Natural killer cell (primary cell): ENCODE measurements at regions of chr6 and their contacts with region 1.

Region 1: DNA sequence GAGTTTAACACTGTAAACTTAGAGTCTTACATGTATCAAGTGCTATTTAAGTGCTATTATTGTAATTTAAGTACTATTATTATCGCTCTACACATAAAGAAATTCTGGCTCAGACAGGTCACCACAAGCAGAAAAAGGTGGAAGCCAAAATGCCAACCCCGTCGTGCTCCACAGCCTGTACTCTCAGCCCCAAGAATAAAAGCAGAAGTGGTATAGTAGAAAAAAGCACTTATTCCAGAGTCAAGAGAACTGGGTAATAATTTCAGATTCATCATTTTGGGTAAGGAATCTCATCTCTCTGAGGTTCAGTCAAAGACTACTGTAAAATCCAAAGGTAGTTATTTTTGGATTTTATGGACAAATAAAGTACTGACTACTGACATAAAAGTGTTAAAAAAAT is 943 bp downstream of the ZUP1 start:
- DNase-seq: peak in 1 of 2 donors; percentile 10
- ATAC-seq: no peak
- H3K4me3 ChIP-seq: peak overlapping the region; percentile 73
- H3K4me3 Mint-ChIP-seq: peak overlapping the region; percentile 97
- H3K27ac ChIP-seq: no peak overlapping the region
- H3K27ac Mint-ChIP-seq: peak overlapping the region; percentile 94 to 97
- H3K4me1 ChIP-seq: peaks cover 11% of the 10 kb centered on the region
- H3K4me1 Mint-ChIP-seq: peaks cover 31% of the 10 kb centered on the region in 2 donors
- H3K27me3 ChIP-seq: no peaks in the 10 kb centered on the region
- H3K27me3 Mint-ChIP-seq: peaks cover 11 to 18% of the 10 kb centered on the region in 2 donors
- CTCF ChIP-seq: no peak

Region 2: DNA sequence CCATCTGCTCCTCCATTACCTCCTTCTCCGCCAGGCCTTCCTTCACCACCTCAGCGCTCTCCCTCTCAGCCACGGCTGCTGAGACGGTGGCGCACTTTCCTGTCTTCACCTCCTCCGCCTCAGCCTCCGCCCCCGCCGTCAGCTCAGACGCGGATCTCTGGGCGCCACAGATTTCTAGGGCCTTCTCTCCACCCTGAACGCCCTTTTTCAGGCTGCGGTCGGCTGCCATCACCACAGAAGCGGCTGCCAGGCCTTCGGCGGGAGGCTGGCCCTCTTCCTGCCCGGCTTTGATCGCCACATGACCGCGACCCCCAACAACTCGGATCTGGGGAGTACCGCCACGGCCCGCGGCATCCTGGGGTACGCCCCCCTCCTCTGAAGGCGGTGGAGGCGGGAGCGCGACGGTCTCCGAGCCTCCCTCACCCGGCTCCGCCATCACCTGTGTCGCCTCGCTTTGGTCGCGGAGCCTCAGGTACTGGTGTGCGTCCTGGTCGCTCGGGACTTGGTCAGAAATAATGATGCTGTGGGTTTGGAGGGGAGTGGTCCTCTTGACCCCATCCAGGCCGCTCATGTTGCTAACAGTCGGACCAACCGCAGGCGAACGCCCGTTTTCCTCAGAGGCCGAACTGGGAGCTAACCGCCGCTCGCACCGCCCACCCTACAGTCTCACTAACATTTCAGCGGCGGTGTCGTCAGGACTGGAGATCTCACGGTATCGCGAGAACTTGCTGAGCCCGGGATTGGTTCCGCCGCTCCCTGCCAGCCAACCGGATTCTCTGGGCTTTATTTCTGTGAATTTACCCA is 388.2 kb before region 1 on chr6 and contains the start of gene TSPYL1:
- intact Hi-C with region 1: loop called (anchors 1 kb)
- DNase-seq: peak; percentile 91 to 98
- ATAC-seq: peak; percentile 88 to 95 (median 89)
- H3K4me3 ChIP-seq: peak within 1 kb of the TSS; percentile 92
- H3K4me3 Mint-ChIP-seq: peak within 1 kb of the TSS; percentile 96
- H3K27ac ChIP-seq: peak within 1 kb of the TSS; percentile 99
- H3K27ac Mint-ChIP-seq: peak within 1 kb of the TSS; percentile 98 to 100
- H3K4me1 ChIP-seq: peaks cover 26% of the 10 kb centered on the region
- H3K4me1 Mint-ChIP-seq: peaks cover 56 to 57% of the 10 kb centered on the region in 2 donors
- H3K27me3 ChIP-seq: no peaks in the 10 kb centered on the region
- H3K27me3 Mint-ChIP-seq: no peaks in the 10 kb centered on the region
- CTCF ChIP-seq: no peak
- total RNA-seq, gene TSPYL1: 134 to 143 (median 142) TPM

Region 3: GRCh38 chr6:116680975-116681808 is 13.6 kb after region 1 on chr6 and contains the start of gene KPNA5:
- intact Hi-C with region 1: loop called (anchors 1 kb)
- DNase-seq: peak; percentile 81 to 94
- ATAC-seq: peak; percentile 91 to 97 (median 93)
- H3K4me3 ChIP-seq: peak within 1 kb of the TSS; percentile 78
- H3K4me3 Mint-ChIP-seq: peak within 1 kb of the TSS; percentile 99
- H3K27ac ChIP-seq: peak within 1 kb of the TSS; percentile 87
- H3K27ac Mint-ChIP-seq: peak within 1 kb of the TSS; percentile 94 to 100
- H3K4me1 ChIP-seq: peaks cover 17% of the 10 kb centered on the region
- H3K4me1 Mint-ChIP-seq: peaks cover 29 to 39% of the 10 kb centered on the region in 2 donors
- H3K27me3 ChIP-seq: no peaks in the 10 kb centered on the region
- H3K27me3 Mint-ChIP-seq: no peaks in the 10 kb centered on the region
- CTCF ChIP-seq: no peak
- total RNA-seq, gene KPNA5: 28.6 to 31.4 (median 29.1) TPM

Region 4: DNA sequence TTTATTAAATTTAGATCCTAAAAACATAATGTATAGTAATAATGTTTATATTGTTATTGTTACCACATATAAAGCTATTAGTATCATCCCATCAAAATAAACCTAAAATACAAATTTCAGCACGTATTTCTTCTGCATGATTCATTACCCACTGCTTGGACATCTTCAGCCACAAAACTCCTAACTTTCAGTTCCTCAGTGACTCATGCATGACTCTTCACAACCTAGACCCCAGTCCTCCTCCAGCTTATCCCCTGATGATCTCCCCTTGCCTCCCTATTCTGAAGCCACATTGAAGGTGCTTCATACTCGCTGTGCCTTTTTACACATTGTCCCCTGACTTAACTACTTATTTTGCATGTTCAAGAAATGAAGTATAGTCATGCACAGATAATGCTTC is 172.5 kb after region 1 on chr6:
- intact Hi-C with region 1: no loop called
- DNase-seq: no peak
- ATAC-seq: no peak
- H3K4me3 ChIP-seq: no peak overlapping the region
- H3K4me3 Mint-ChIP-seq: no peak overlapping the region
- H3K27ac ChIP-seq: no peak overlapping the region
- H3K27ac Mint-ChIP-seq: no peak overlapping the region
- H3K4me1 ChIP-seq: no peaks in the 10 kb centered on the region
- H3K4me1 Mint-ChIP-seq: no peaks in the 10 kb centered on the region
- H3K27me3 ChIP-seq: no peaks in the 10 kb centered on the region
- H3K27me3 Mint-ChIP-seq: no peaks in the 10 kb centered on the region
- CTCF ChIP-seq: no peak

Region 5: GRCh38 chr6:116925088-116925794 is 257.6 kb after region 1 on chr6:
- intact Hi-C with region 1: no loop called
- DNase-seq: no peak
- ATAC-seq: no peak
- H3K4me3 ChIP-seq: no peak overlapping the region
- H3K4me3 Mint-ChIP-seq: no peak overlapping the region
- H3K27ac ChIP-seq: no peak overlapping the region
- H3K27ac Mint-ChIP-seq: no peak overlapping the region
- H3K4me1 ChIP-seq: no peaks in the 10 kb centered on the region
- H3K4me1 Mint-ChIP-seq: no peaks in the 10 kb centered on the region
- H3K27me3 ChIP-seq: no peaks in the 10 kb centered on the region
- H3K27me3 Mint-ChIP-seq: no peaks in the 10 kb centered on the region
- CTCF ChIP-seq: no peak